ENCODE measurements at regions of chr17 and their contacts with region 1.

Region 1: GRCh38 chr17:73616120-73616872 is 27.9 kb downstream of the SDK2 start:
- DNase-seq: no peak
- H3K4me3 ChIP-seq: no peak overlapping the region
- H3K27ac ChIP-seq: no peak overlapping the region
- H3K4me1 ChIP-seq: peaks cover 22 to 53% (median 38%) of the 10 kb centered on the region in 4 experiments
- H3K27me3 ChIP-seq: no peaks in the 10 kb centered on the region; a peak in 1 of 7 replicates
- CTCF ChIP-seq: no peak
- EP300 ChIP-seq: no peak
- POLR2A ChIP-seq: no peak
- RAD21 ChIP-seq: no peak

Region 2: DNA sequence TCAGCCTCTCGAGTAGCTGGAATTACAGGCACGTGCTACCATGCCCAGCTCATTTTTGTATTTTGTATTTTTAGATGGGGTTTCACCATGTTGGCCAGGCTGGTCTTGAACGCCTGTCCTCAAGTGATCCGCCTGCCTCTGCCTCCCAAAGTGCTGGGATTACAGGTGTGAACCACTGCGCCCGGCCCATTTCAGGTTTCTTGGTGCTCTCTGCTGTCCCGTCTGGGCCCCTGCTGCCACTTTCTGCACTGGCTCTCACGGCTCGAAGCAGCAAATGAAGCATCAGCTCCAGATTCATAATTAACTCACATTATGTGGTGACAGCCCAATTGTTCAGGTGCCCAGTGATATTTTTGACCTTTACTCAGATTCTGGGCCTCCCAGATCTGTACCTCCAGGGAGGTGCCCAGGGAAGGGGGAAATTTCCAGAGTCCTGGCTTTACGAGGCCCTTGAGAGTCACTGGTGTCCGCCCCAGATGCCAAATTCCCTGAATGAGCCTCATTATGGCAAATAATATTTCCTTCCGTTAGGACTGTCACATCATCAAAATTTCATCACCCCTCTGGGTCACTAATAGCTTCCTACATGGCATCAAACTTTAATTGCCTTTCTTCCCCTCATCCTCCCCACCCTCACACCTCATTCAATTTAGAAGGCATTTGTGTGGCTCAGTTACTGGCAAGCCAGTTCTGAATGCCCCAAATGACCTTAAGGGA is 19.0 kb after region 1 on chr17:
- CTCF ChIA-PET with region 1: interaction called, 13 read pairs
- POLR2A ChIA-PET with region 1: interaction called, 3 read pairs
- DNase-seq: no peak
- H3K4me3 ChIP-seq: no peak overlapping the region
- H3K27ac ChIP-seq: no peak overlapping the region
- H3K4me1 ChIP-seq: no peaks in the 10 kb centered on the region
- H3K27me3 ChIP-seq: no peaks in the 10 kb centered on the region
- CTCF ChIP-seq: no peak
- EP300 ChIP-seq: no peak
- POLR2A ChIP-seq: no peak
- RAD21 ChIP-seq: peak in 1 of 2 experiments; percentile 16; a peak in 1 of 4 replicates

Region 3: GRCh38 chr17:73710095-73710592 is 93.8 kb after region 1 on chr17:
- CTCF ChIA-PET with region 1: no interaction called
- POLR2A ChIA-PET with region 1: no interaction called
- DNase-seq: peak; percentile 39 to 93
- H3K4me3 ChIP-seq: no peak overlapping the region; a peak in 1 of 8 replicates
- H3K27ac ChIP-seq: no peak overlapping the region
- H3K4me1 ChIP-seq: peaks cover 0 to 4% (median 3%) of the 10 kb centered on the region in 4 experiments; a peak in 5 of 7 replicates
- H3K27me3 ChIP-seq: peaks cover 0 to 4% (median under 1%) of the 10 kb centered on the region in 4 experiments; a peak in 3 of 7 replicates
- CTCF ChIP-seq: peak; percentile 76 to 89 (median 85)
- EP300 ChIP-seq: no peak
- POLR2A ChIP-seq: no peak
- RAD21 ChIP-seq: peak; percentile 93 to 95

Region 4: GRCh38 chr17:73783945-73784603 is 167.8 kb after region 1 on chr17:
- CTCF ChIA-PET with region 1: no interaction called
- POLR2A ChIA-PET with region 1: no interaction called
- DNase-seq: no peak
- H3K4me3 ChIP-seq: no peak overlapping the region
- H3K27ac ChIP-seq: no peak overlapping the region
- H3K4me1 ChIP-seq: peaks cover 11 to 32% (median 17%) of the 10 kb centered on the region in 4 experiments
- H3K27me3 ChIP-seq: no peaks in the 10 kb centered on the region; a peak in 1 of 7 replicates
- CTCF ChIP-seq: no peak
- EP300 ChIP-seq: no peak
- POLR2A ChIP-seq: no peak
- RAD21 ChIP-seq: no peak